ENCODE measurements at regions of chr20 and their contacts with region 1.

Region 1: GRCh38 chr20:3173610-3174441 is 477 bp upstream of the LZTS3 start:
- DNase-seq: no peak
- ATAC-seq: peak; percentile 90
- H3K4me3 ChIP-seq: peak overlapping the region; percentile 34 to 94 (median 79)
- H3K4me3 Mint-ChIP-seq: peak overlapping the region; percentile 87
- H3K27ac ChIP-seq: no peak overlapping the region
- H3K27ac Mint-ChIP-seq: peak overlapping the region; percentile 73
- H3K4me1 ChIP-seq: peaks cover 18 to 19% of the 10 kb centered on the region in 2 donors
- H3K4me1 Mint-ChIP-seq: peaks cover 17% of the 10 kb centered on the region
- H3K27me3 ChIP-seq: peaks cover 0 to 39% (median 25%) of the 10 kb centered on the region in 4 experiments
- H3K27me3 Mint-ChIP-seq: peaks cover 43% of the 10 kb centered on the region
- CTCF ChIP-seq: peak; percentile 30

Region 2: DNA sequence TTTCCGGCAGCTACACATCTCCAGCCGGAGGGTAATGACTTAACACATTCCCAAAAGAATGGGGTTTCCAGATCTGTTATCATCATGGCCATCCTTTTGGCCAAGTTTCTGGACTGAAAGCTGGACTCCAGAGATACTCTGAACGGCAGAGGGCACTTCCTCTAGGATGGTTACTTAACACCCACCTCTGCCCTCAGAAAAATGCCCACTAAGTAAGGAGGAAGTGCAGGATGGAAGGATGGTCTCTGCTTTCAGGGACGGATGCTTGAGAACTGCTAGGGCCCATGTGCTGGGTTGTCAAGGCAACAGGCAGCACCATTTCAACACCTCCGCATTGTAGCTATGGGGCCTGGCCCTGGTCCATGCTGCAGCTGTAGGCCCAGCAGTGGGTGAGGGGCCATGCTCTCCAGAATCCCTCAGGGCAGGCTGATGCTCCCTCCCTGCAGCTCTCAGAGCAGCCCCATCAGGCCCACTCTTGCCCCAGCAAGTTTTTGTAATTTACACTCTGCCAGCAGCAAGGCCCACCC is 894.5 kb before region 1 on chr20:
- CTCF ChIA-PET with region 1: no interaction called
- POLR2A ChIA-PET with region 1: no interaction called
- intact Hi-C with region 1: no loop called
- DNase-seq: no peak
- ATAC-seq: no peak
- H3K4me3 ChIP-seq: no peak overlapping the region
- H3K4me3 Mint-ChIP-seq: no peak overlapping the region
- H3K27ac ChIP-seq: no peak overlapping the region
- H3K27ac Mint-ChIP-seq: no peak overlapping the region
- H3K4me1 ChIP-seq: no peaks in the 10 kb centered on the region
- H3K4me1 Mint-ChIP-seq: no peaks in the 10 kb centered on the region
- H3K27me3 ChIP-seq: peaks cover 0 to 4% (median 0%) of the 10 kb centered on the region in 4 experiments
- H3K27me3 Mint-ChIP-seq: peaks cover 5% of the 10 kb centered on the region
- CTCF ChIP-seq: no peak

Region 3: GRCh38 chr20:3156811-3157619 is 16.8 kb before region 1 on chr20:
- CTCF ChIA-PET with region 1: interaction called, 4 read pairs
- POLR2A ChIA-PET with region 1: no interaction called
- intact Hi-C with region 1: loop called (anchors 1 kb)
- DNase-seq: peak; percentile 24
- ATAC-seq: peak; percentile 23
- H3K4me3 ChIP-seq: no peak overlapping the region
- H3K4me3 Mint-ChIP-seq: peak overlapping the region; percentile 67
- H3K27ac ChIP-seq: peak overlapping the region; percentile 1 to 48
- H3K27ac Mint-ChIP-seq: peak overlapping the region; percentile 74
- H3K4me1 ChIP-seq: peaks cover 34 to 38% of the 10 kb centered on the region in 2 donors
- H3K4me1 Mint-ChIP-seq: peaks cover 61% of the 10 kb centered on the region
- H3K27me3 ChIP-seq: no peaks in the 10 kb centered on the region
- H3K27me3 Mint-ChIP-seq: no peaks in the 10 kb centered on the region
- CTCF ChIP-seq: no peak

Region 4: DNA sequence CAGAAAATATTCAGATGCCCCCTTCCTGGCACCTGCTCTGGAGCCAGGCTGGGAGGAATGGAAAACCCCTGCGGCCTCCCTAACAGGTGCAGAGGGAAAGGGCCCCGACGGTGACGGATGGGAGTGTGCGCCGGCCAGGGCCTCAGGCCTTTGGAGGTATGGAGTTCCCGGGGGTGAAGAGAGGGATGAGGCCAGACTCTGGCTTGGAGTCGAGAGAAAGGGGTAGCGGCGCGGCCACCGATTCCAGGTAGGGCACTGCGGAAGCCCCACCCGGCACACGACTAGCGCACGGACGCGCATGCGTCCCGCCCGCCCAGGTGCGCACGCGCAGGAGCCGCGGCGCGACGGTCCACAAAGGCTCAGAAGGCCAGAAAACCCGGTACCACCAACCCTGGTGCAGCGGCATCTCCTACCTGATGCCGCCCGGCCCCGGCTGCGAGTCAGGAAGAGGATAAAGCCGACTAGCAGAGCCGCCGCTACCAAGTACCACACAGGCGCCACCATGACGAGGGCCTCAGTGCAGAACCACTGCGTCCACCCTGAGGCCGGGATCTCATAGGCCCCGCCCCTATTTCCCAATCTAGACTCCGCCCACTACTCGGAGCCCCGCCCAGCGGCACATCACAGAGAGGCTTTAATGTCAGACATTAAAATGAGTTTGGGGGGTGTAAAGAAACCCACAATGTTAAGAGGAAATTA is 30.4 kb after region 1 on chr20 and contains the start of gene DDRGK1:
- CTCF ChIA-PET with region 1: interaction called, 5 read pairs
- POLR2A ChIA-PET with region 1: interaction called, 5 read pairs
- intact Hi-C with region 1: loop called (anchors 1 kb)
- DNase-seq: peak; percentile 96
- ATAC-seq: peak; percentile 93
- H3K4me3 ChIP-seq: peak within 1 kb of the TSS; percentile 73 to 89 (median 84)
- H3K4me3 Mint-ChIP-seq: peak within 1 kb of the TSS; percentile 97
- H3K27ac ChIP-seq: peak within 1 kb of the TSS; percentile 80
- H3K27ac Mint-ChIP-seq: peak within 1 kb of the TSS; percentile 96
- H3K4me1 ChIP-seq: peaks cover 15% of the 10 kb centered on the region in 2 donors
- H3K4me1 Mint-ChIP-seq: peaks cover 20% of the 10 kb centered on the region
- H3K27me3 ChIP-seq: no peaks in the 10 kb centered on the region
- H3K27me3 Mint-ChIP-seq: no peaks in the 10 kb centered on the region
- CTCF ChIP-seq: no peak
- total RNA-seq, gene DDRGK1: 51.9 and 55.5 TPM in 2 replicates

Region 5: DNA sequence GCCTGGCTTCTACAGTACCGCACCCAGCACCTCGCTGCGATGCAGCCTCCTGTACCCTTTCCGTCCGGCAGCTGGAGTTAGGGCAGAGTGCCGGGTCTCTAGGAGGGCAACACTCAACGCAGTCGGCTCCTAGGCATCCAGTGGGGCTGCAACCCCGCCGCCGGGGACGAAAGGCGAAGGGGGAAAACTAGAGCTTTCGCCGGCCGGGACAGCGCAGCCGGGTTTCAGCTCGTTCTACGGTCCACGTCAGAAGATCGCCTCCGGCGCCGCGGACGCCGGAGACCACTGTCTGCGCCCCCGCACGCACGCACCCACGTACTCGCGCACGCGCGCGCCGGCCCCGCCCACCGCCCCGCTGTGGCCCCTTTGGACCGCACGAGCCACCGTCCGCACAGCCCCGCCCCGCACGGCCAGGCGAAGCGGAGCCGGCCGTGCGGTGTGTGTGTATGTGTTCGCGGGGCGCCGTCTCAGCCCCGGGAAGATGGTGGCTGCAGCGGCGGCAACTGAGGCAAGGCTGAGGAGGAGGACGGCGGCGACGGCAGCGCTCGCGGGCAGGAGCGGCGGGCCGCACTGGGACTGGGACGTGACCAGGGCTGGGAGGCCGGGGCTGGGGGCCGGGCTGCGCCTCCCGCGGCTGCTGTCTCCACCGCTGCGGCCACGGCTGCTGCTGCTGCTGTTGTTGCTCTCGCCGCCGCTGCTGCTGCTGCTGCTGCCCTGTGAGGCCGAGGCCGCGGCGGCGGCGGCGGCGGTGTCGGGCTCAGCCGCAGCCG is 297.0 kb after region 1 on chr20 and contains the start of gene ATRN:
- CTCF ChIA-PET with region 1: no interaction called
- POLR2A ChIA-PET with region 1: no interaction called
- intact Hi-C with region 1: loop called (anchors 2 kb)
- DNase-seq: peak; percentile 94
- ATAC-seq: peak; percentile 92
- H3K4me3 ChIP-seq: peak within 1 kb of the TSS; percentile 49 to 88 (median 72)
- H3K4me3 Mint-ChIP-seq: peak within 1 kb of the TSS; percentile 90
- H3K27ac ChIP-seq: peak within 1 kb of the TSS; percentile 46 to 72
- H3K27ac Mint-ChIP-seq: peak within 1 kb of the TSS; percentile 88
- H3K4me1 ChIP-seq: peaks cover 25 to 35% of the 10 kb centered on the region in 2 donors
- H3K4me1 Mint-ChIP-seq: peaks cover 36% of the 10 kb centered on the region
- H3K27me3 ChIP-seq: peaks cover 0 to 2% (median under 1%) of the 10 kb centered on the region in 4 experiments
- H3K27me3 Mint-ChIP-seq: peaks cover 6% of the 10 kb centered on the region
- CTCF ChIP-seq: no peak
- total RNA-seq, gene ATRN: 18.3 and 19.5 TPM in 2 replicates

Measured in B cell (primary cell).